AG04449 (cell line): ENCODE measurements at regions of chr1 and their contacts with region 1.

Region 1: GRCh38 chr1:32773018-32773763 is 44.0 kb downstream of the YARS1 start:
- DNase-seq: no peak
- H3K4me3 ChIP-seq: no peak overlapping the region
- CTCF ChIP-seq: peak; percentile 91

Region 2: GRCh38 chr1:32400876-32401631 is 372.1 kb before region 1 on chr1:
- CTCF ChIA-PET with region 1: interaction called, 37 read pairs
- POLR2A ChIA-PET with region 1: no interaction called
- DNase-seq: peak; percentile 31
- H3K4me3 ChIP-seq: no peak overlapping the region
- CTCF ChIP-seq: peak; percentile 84

Region 3: GRCh38 chr1:32684167-32684811 is 88.9 kb before region 1 on chr1:
- CTCF ChIA-PET with region 1: interaction called, 16 read pairs
- POLR2A ChIA-PET with region 1: no interaction called
- DNase-seq: no peak
- H3K4me3 ChIP-seq: no peak overlapping the region
- CTCF ChIP-seq: no peak

Region 4: GRCh38 chr1:32733582-32734321 is 39.4 kb before region 1 on chr1:
- CTCF ChIA-PET with region 1: interaction called, 19 read pairs
- POLR2A ChIA-PET with region 1: no interaction called
- DNase-seq: no peak
- H3K4me3 ChIP-seq: no peak overlapping the region
- CTCF ChIP-seq: no peak

Region 5: DNA sequence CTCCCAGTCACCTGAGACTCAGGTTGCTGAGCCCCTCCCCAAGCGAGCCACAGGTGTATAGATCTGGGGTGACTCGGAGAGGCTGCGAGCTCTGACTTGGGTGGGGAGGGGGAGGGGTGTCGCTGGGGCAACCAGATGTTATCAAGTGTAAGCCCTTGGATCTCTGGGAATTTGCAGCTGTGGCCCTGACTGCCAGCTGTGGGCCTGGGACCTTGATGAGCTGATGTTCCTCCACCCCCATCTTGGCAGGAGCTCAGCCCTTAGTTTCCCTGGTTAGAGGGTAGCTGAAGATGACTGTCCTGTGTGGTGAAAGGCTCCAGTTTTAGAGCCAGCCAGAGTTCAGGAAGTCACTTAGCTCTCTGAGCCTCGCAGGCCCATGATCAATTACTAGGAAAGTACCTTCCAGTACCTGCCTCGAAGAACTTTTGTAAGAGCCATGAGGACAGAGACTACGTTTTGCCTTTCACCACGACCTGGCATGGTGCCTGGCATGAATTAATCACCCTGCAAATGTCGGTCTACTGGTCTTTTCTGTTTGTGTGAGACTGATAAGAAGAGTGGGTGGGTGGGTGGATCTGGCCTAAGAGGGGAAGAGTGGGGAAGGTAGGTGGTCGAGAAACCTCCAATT is 11.8 kb before region 1 on chr1:
- CTCF ChIA-PET with region 1: interaction called, 61 read pairs
- POLR2A ChIA-PET with region 1: no interaction called
- DNase-seq: no peak
- H3K4me3 ChIP-seq: no peak overlapping the region
- CTCF ChIP-seq: no peak

Region 6: DNA sequence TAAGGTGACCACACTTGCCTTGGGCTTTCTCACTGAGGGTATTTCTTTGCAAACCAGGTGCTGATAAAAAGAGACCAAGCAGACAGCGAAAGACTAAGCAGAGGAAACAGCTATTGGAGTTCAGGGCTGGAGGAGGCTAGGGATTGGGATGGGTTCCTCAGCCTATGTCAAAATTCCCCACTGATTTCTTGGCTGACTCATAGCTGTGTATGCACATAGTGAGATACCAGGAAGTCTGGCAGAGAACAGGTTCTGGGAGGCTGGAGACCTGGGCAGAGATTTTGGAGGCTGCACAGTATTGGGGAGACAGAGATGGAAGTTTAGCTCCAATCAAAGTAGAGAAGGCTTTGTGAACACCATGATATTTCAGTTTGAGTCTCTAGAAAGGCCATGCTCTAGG is 18.7 kb after region 1 on chr1:
- CTCF ChIA-PET with region 1: interaction called, 52 read pairs
- POLR2A ChIA-PET with region 1: interaction called, 5 read pairs
- DNase-seq: no peak
- H3K4me3 ChIP-seq: no peak overlapping the region
- CTCF ChIP-seq: no peak